ENCODE measurements at regions of chr13 and their contacts with region 1.

Region 1: GRCh38 chr13:75876360-75877050 is 240.4 kb downstream of the LMO7 start:
- DNase-seq: peak; percentile 49 to 54 (median 51)
- H3K4me3 ChIP-seq: no peak overlapping the region
- H3K4me3 Mint-ChIP-seq: peak overlapping the region in 6 of 8 donors; percentile 24 to 83 (median 58)
- H3K27ac ChIP-seq: no peak overlapping the region
- H3K27ac Mint-ChIP-seq: peak overlapping the region in 3 of 7 donors; percentile 11 to 74 (median 25)
- H3K4me1 ChIP-seq: peaks cover 10% of the 10 kb centered on the region
- H3K4me1 Mint-ChIP-seq: peaks cover 7 to 16% (median 10%) of the 10 kb centered on the region in 4 donors
- H3K27me3 ChIP-seq: no peaks in the 10 kb centered on the region
- H3K27me3 Mint-ChIP-seq: peaks cover 0 to 1% of the 10 kb centered on the region in 2 donors

Region 2: GRCh38 chr13:75760131-75761021 is 116.1 kb before region 1 on chr13:
- CTCF ChIA-PET with region 1: interaction called, 11 read pairs
- POLR2A ChIA-PET with region 1: no interaction called
- intact Hi-C with region 1: loop called (anchors 5 kb)
- DNase-seq: peak in 4 of 5 donors; percentile 24 to 29 (median 26)
- H3K4me3 ChIP-seq: peak overlapping the region in 1 of 2 donors; percentile 20
- H3K4me3 Mint-ChIP-seq: peak overlapping the region; percentile 77 to 91 (median 84)
- H3K27ac ChIP-seq: no peak overlapping the region
- H3K27ac Mint-ChIP-seq: peak overlapping the region; percentile 62 to 87 (median 77)
- H3K4me1 ChIP-seq: peaks cover 64% of the 10 kb centered on the region
- H3K4me1 Mint-ChIP-seq: peaks cover 54 to 80% (median 66%) of the 10 kb centered on the region in 4 donors
- H3K27me3 ChIP-seq: no peaks in the 10 kb centered on the region
- H3K27me3 Mint-ChIP-seq: no peaks in the 10 kb centered on the region

Region 3: GRCh38 chr13:76016799-76017400 is 140.4 kb after region 1 on chr13:
- CTCF ChIA-PET with region 1: interaction called, 3 read pairs
- POLR2A ChIA-PET with region 1: no interaction called
- intact Hi-C with region 1: loop called (anchors 1 kb)
- DNase-seq: peak in 1 of 5 donors; percentile 5
- H3K4me3 ChIP-seq: no peak overlapping the region
- H3K4me3 Mint-ChIP-seq: no peak overlapping the region
- H3K27ac ChIP-seq: no peak overlapping the region
- H3K27ac Mint-ChIP-seq: no peak overlapping the region
- H3K4me1 ChIP-seq: no peaks in the 10 kb centered on the region
- H3K4me1 Mint-ChIP-seq: peaks cover 0 to 3% (median 0%) of the 10 kb centered on the region in 4 donors
- H3K27me3 ChIP-seq: no peaks in the 10 kb centered on the region
- H3K27me3 Mint-ChIP-seq: peaks cover 0 to 2% of the 10 kb centered on the region in 2 donors

Region 4: DNA sequence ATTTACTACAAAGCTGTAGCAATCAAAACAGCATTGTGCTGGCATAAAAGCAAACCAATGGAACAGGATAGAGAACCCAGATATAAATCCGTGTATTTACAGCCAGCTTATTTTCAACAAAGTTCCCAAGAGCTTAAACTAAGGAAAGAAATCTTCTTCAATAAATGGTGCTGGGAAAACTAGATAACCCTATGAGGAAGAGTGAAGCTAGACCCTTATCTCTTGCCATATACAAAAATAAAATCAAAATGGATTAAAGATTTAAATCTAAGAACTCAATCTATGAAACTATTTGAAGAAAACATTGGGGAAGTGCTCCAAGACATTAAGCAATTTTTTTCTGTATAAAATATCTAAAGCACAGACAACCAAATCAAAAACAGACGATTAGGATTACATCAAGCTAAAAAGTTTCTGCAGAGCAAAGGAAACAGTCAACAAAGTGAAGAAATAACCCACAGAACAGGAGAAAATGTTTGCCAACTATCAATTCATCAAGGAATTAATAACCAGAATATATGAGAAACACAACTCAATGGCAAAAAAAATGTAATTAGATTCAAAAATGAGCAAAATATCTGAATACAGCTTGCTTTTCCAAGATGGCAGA is 240.4 kb after region 1 on chr13:
- CTCF ChIA-PET with region 1: no interaction called
- POLR2A ChIA-PET with region 1: no interaction called
- intact Hi-C with region 1: no loop called
- DNase-seq: no peak
- H3K4me3 ChIP-seq: no peak overlapping the region
- H3K4me3 Mint-ChIP-seq: no peak overlapping the region
- H3K27ac ChIP-seq: no peak overlapping the region
- H3K27ac Mint-ChIP-seq: no peak overlapping the region
- H3K4me1 ChIP-seq: no peaks in the 10 kb centered on the region
- H3K4me1 Mint-ChIP-seq: no peaks in the 10 kb centered on the region
- H3K27me3 ChIP-seq: no peaks in the 10 kb centered on the region
- H3K27me3 Mint-ChIP-seq: no peaks in the 10 kb centered on the region

Region 5: GRCh38 chr13:76473552-76474134 is 597.1 kb after region 1 on chr13:
- CTCF ChIA-PET with region 1: interaction called, 71 read pairs
- POLR2A ChIA-PET with region 1: no interaction called
- intact Hi-C with region 1: loop called (anchors 1 kb)
- DNase-seq: peak; percentile 61 to 67 (median 66)
- H3K4me3 ChIP-seq: no peak overlapping the region
- H3K4me3 Mint-ChIP-seq: no peak overlapping the region
- H3K27ac ChIP-seq: no peak overlapping the region
- H3K27ac Mint-ChIP-seq: no peak overlapping the region
- H3K4me1 ChIP-seq: no peaks in the 10 kb centered on the region
- H3K4me1 Mint-ChIP-seq: no peaks in the 10 kb centered on the region
- H3K27me3 ChIP-seq: no peaks in the 10 kb centered on the region
- H3K27me3 Mint-ChIP-seq: peaks cover 0 to 6% of the 10 kb centered on the region in 2 donors

Region 6: DNA sequence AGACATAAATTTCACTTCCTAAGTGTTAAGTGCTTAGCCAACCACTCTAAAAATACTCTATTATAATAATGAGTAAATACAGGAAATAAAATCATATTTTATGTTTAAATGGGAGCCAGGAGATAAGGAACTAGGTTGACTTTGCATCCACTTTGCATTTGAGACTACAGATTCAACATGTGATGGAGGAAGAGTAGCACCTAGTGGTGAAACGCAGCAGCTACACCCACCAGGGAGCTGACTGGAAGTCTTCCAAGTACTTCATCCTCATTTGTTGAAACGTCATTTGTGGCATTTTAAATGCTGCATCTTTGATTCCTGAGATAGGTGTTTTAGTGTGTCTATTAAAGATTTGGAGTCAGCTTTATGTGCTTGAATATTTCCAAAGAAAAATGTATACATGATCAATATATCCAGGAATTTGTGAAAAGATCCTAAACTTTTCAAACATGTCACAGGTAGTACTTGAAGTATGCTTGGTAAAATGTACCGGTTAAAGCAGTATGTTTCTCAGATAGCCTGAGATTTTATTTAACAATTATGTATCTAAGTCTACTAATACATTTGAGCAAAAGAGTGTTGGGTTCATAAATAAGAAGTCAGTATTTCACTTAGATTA is 1027.1 kb after region 1 on chr13:
- CTCF ChIA-PET with region 1: interaction called, 127 read pairs
- POLR2A ChIA-PET with region 1: no interaction called
- intact Hi-C with region 1: loop called (anchors 1 kb)
- DNase-seq: peak; percentile 60 to 68 (median 64)
- H3K4me3 ChIP-seq: no peak overlapping the region
- H3K4me3 Mint-ChIP-seq: no peak overlapping the region
- H3K27ac ChIP-seq: no peak overlapping the region
- H3K27ac Mint-ChIP-seq: no peak overlapping the region
- H3K4me1 ChIP-seq: no peaks in the 10 kb centered on the region
- H3K4me1 Mint-ChIP-seq: no peaks in the 10 kb centered on the region
- H3K27me3 ChIP-seq: no peaks in the 10 kb centered on the region
- H3K27me3 Mint-ChIP-seq: peaks cover 10 to 12% of the 10 kb centered on the region in 2 donors

Region 7: GRCh38 chr13:76980075-76980718 is 1103.7 kb after region 1 on chr13:
- CTCF ChIA-PET with region 1: interaction called, 10 read pairs
- POLR2A ChIA-PET with region 1: no interaction called
- intact Hi-C with region 1: loop called (anchors 1 kb)
- DNase-seq: peak; percentile 72 to 83 (median 78)
- H3K4me3 ChIP-seq: no peak overlapping the region
- H3K4me3 Mint-ChIP-seq: peak overlapping the region in 6 of 8 donors; percentile 35 to 69 (median 54)
- H3K27ac ChIP-seq: no peak overlapping the region
- H3K27ac Mint-ChIP-seq: peak overlapping the region in 2 of 7 donors; percentile 29 to 48
- H3K4me1 ChIP-seq: peaks cover 20% of the 10 kb centered on the region
- H3K4me1 Mint-ChIP-seq: peaks cover 7 to 15% (median 10%) of the 10 kb centered on the region in 4 donors
- H3K27me3 ChIP-seq: no peaks in the 10 kb centered on the region
- H3K27me3 Mint-ChIP-seq: peaks cover 18% of the 10 kb centered on the region in 2 donors

Measured in CD4-positive, alpha-beta memory T cell (primary cell).